Caco-2 (cell line): ENCODE measurements at regions of chr13 and their contacts with region 1.

Region 1: DNA sequence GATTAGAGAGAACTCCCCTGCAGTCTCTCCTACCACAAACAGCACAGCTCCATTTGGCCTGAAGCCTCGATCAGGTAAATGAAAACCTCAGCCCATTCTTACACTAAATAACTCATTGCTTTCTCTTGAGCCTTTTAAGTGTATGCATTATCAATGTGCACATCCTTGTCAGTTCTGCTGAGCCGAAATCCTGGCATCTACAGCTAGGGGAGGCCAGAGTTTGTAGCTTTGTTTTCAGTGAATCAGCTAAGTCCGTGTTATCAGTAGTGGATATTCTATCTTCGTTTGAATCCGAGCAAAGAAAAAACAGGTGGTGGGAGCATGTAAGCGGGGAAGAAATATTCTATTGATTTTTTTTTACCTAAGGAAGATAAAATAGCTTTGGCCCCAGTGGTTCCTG is 84.4 kb downstream of the ESD start:
- DNase-seq: no peak
- H3K4me3 ChIP-seq: no peak overlapping the region
- H3K4me3 Mint-ChIP-seq: no peak overlapping the region
- H3K27ac Mint-ChIP-seq: no peak overlapping the region
- H3K4me1 ChIP-seq: peaks cover 22% of the 10 kb centered on the region
- H3K4me1 Mint-ChIP-seq: peaks cover 7% of the 10 kb centered on the region
- H3K27me3 ChIP-seq: no peaks in the 10 kb centered on the region
- H3K27me3 Mint-ChIP-seq: no peaks in the 10 kb centered on the region
- CTCF ChIP-seq: peak in 1 of 2 experiments; percentile 22

Region 2: DNA sequence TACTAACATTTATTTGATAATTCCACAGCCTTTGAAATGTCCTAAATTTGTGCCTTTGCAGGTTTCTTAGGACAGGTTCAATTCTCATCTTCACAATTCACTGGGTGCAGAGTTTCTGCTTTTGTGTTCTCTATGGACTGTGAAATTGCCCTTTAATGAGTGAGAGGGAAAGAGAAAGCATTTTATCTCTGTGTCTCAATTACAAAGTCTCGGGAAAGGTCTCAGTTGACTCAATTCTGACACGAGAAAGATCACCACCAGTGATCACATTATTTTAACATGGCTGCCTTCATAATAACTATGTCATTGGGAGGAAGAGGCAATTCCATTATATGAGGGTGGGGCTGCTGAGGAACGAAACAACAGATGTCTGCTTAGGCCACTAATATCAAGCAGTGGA is 185.8 kb before region 1 on chr13:
- CTCF ChIA-PET with region 1: no interaction called
- POLR2A ChIA-PET with region 1: interaction called, 14 read pairs
- intact Hi-C with region 1: no loop called
- DNase-seq: no peak
- H3K4me3 ChIP-seq: no peak overlapping the region
- H3K4me3 Mint-ChIP-seq: no peak overlapping the region
- H3K27ac Mint-ChIP-seq: no peak overlapping the region
- H3K4me1 ChIP-seq: peaks cover 11% of the 10 kb centered on the region; the same call in 1 of the 2 replicates
- H3K4me1 Mint-ChIP-seq: peaks cover 20% of the 10 kb centered on the region
- H3K27me3 ChIP-seq: no peaks in the 10 kb centered on the region
- H3K27me3 Mint-ChIP-seq: no peaks in the 10 kb centered on the region
- CTCF ChIP-seq: no peak